MCF 10A (cell line): ENCODE measurements at regions of chr9 and their contacts with region 1.

Region 1: GRCh38 chr9:73132034-73132776 is 19.5 kb upstream of the ANXA1 start:
- DNase-seq: peak; percentile 90
- H3K4me3 Mint-ChIP-seq: peak overlapping the region; percentile 76
- H3K27ac Mint-ChIP-seq: peak overlapping the region; percentile 97
- H3K4me1 Mint-ChIP-seq: peaks cover 31% of the 10 kb centered on the region
- H3K27me3 Mint-ChIP-seq: no peaks in the 10 kb centered on the region
- CTCF ChIP-seq: no peak

Region 2: DNA sequence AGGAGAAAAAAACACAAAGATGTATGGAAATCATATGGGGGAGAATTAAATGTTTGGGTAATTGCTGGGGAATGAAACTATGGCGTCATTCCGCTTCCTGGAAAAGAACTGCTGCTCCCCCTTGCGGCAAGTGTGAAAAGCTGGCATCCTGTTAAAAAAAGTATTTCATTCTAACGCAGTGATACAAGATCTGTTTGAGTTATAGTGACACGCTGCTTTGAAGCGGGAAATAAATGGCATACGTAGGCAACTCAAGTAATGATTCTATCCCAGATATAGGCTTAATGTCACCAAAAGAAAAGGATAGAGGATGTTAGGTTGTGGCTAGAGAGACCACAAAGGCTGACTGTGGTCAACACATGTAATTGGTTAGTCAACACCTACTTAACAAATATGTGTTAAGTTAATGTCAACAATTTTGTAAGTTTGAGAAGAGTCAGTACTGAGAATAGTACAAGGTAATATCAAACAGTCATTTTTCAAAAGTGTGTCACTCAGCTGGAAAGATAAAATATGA is 109.1 kb before region 1 on chr9:
- CTCF ChIA-PET with region 1: no interaction called
- POLR2A ChIA-PET with region 1: no interaction called
- intact Hi-C with region 1: no loop called
- DNase-seq: peak; percentile 81
- H3K4me3 Mint-ChIP-seq: no peak overlapping the region
- H3K27ac Mint-ChIP-seq: no peak overlapping the region
- H3K4me1 Mint-ChIP-seq: no peaks in the 10 kb centered on the region
- H3K27me3 Mint-ChIP-seq: peaks cover 72% of the 10 kb centered on the region
- CTCF ChIP-seq: peak; percentile 78

Region 3: DNA sequence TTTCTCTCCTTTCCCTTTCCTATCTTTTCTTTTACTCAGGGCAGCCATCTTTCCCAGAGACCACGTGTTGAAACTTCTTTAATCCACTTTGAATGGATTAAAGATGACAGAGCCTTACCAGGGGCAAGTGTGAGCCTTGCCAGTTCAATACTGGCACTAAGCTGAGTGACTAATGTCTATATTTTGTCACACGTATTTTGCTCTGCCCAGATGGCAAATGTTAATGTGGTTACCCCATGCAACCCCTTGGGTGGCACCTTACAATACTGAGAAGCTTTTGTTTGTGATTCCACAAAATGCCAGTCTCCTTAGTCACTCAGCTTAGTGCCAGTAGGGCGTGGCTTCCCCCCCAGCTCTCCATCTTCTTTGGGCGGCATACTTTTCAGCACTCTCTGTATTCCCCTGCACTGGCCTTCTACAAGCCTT is 44.3 kb after region 1 on chr9:
- CTCF ChIA-PET with region 1: interaction called, 3 read pairs
- POLR2A ChIA-PET with region 1: interaction called, 12 read pairs
- intact Hi-C with region 1: no loop called
- DNase-seq: peak; percentile 80
- H3K4me3 Mint-ChIP-seq: no peak overlapping the region
- H3K27ac Mint-ChIP-seq: peak overlapping the region; percentile 83
- H3K4me1 Mint-ChIP-seq: peaks cover 15% of the 10 kb centered on the region
- H3K27me3 Mint-ChIP-seq: no peaks in the 10 kb centered on the region
- CTCF ChIP-seq: no peak

Region 4: DNA sequence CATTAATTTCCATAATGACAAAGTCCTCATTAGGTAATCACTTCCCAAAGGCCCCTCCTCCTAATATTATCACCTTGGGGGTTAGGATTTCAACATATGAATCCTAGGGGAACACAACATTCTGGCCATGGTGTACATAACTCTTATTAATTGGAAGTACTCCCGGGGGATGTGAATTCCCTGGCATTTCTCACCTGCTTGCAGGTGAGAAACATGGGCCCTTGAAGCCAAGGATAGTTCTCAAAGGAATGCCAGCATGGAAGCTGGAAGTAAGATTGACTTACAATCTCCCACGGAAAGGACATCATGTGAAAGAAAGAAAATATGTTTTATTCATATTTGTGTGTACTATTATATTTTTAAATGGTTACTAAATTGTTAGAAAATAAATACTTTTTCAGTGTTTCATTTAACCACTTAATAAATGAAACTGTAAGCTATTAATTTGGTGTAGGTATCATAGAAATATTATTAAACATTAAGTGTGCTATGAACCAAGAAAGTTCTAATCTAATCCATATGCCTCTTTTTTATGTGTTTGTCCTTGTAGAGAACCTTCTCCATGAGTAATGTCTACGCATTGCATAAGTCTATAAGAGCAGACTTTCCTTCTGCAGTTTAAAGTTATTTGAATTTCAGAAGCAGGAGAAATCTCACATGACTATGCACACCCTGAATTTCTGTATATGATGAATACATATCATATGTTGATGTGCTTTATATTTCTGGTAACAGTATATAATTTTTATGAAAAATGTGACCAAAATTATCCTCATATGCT is 78.9 kb after region 1 on chr9:
- CTCF ChIA-PET with region 1: no interaction called
- POLR2A ChIA-PET with region 1: no interaction called
- intact Hi-C with region 1: no loop called
- DNase-seq: no peak
- H3K4me3 Mint-ChIP-seq: no peak overlapping the region
- H3K27ac Mint-ChIP-seq: no peak overlapping the region
- H3K4me1 Mint-ChIP-seq: no peaks in the 10 kb centered on the region
- H3K27me3 Mint-ChIP-seq: peaks cover 90% of the 10 kb centered on the region
- CTCF ChIP-seq: no peak